Gastrocnemius medialis (tissue), 4 donors: ENCODE measurements at regions of chr7 and their contacts with region 1.

Region 1: DNA sequence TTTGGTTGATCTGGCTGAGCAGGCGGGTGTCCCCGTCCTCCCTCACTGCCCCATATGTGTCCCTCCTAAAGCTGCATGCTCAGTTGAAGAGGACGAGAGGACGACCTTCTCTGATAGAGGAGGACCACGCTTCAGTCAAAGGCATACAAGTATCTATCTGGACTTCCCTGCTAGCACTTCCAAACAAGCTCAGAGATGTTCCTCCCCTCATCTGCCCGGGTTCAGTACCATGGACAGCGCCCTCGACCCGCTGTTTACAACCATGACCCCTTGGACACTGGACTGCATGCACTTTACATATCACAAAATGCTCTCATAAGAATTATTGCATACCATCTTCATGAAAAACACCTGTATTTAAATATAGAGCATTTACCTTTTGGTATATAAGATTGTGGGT is 26.9 kb upstream of the TRIM56 start:
- DNase-seq: peak in 1 of 2 donors; percentile 20
- ATAC-seq: peak; percentile 58
- H3K4me3 ChIP-seq: no peak overlapping the region
- H3K27ac ChIP-seq: no peak overlapping the region
- H3K4me1 ChIP-seq: no peaks in the 10 kb centered on the region
- H3K27me3 ChIP-seq: peaks cover 0 to 8% (median 5%) of the 10 kb centered on the region in 3 donors
- CTCF ChIP-seq: no peak
- POLR2A ChIP-seq: no peak

Region 2: GRCh38 chr7:100655908-100656674 is 402.3 kb before region 1 on chr7 and contains the start of gene ACTL6B:
- in situ Hi-C with region 1: no loop called
- intact Hi-C with region 1: no loop called
- DNase-seq: peak in 1 of 2 donors; percentile 37
- ATAC-seq: peak; percentile 30 to 50
- H3K4me3 ChIP-seq: no peak within 1 kb of the TSS
- H3K27ac ChIP-seq: no peak within 1 kb of the TSS
- H3K4me1 ChIP-seq: no peaks in the 10 kb centered on the region
- H3K27me3 ChIP-seq: peaks cover 39 to 53% (median 50%) of the 10 kb centered on the region in 3 donors
- CTCF ChIP-seq: no peak
- POLR2A ChIP-seq: no peak
- total RNA-seq, gene ACTL6B: not detected

Region 3: GRCh38 chr7:100889761-100890634 is 168.4 kb before region 1 on chr7:
- in situ Hi-C with region 1: loop called in 2 of 4 experiments (anchors 5 kb)
- intact Hi-C with region 1: no loop called
- DNase-seq: peak; percentile 92
- ATAC-seq: peak; percentile 78 to 82
- H3K4me3 ChIP-seq: peak overlapping the region; percentile 69 to 89 (median 85)
- H3K27ac ChIP-seq: peak overlapping the region; percentile 95 to 99 (median 97)
- H3K4me1 ChIP-seq: peaks cover 28 to 49% of the 10 kb centered on the region in 2 donors
- H3K27me3 ChIP-seq: peaks cover 0 to under 1% (median 0%) of the 10 kb centered on the region in 3 donors
- CTCF ChIP-seq: peak in 1 of 5 experiments; percentile 10
- POLR2A ChIP-seq: peak; percentile 75 to 76

Region 4: DNA sequence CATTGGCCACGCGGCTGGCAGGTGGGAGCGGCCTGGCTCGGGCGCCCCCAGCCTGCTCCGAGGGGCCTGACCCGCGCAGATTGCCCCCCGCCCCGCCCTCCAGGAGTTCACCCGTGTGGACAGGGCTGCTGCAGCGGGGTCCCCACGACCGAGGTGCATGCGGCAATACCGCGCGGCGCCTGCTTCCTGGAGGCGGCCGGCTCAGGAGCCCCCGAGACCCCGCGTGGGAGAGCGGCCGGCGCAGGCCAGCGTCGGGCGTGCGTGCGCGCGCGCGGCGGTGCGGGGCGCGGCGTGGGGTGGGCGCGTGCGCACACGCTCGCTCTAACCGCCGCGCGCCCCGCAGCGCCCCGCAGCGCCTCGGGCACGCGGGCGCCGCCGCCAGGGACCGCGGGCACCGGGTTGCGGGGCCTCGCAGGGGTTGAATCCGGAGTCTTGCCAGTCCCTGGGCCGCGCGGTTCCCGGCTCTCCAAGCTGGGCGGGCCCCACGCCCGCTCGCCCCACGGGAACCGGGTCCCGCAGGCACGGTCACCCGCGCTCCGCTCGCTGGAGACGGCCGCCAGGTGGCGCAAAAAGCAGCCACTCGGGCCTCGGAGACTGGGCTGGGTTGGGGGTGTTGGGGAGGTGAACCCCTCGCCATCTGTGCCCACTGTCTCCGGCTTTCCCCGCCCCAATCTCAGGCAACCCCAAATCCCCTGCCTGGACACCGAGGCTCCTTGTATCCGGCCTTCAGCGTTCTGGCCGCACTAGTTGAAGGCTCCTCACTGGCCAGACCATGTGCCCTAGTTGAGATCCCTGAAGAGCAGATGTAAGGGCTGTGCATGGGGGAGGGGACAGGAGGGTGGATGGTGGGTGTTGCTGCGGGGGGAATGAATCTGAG is 161.4 kb before region 1 on chr7:
- in situ Hi-C with region 1: loop called in 3 of 4 experiments (anchors 5 kb)
- intact Hi-C with region 1: loop called (anchors 1 kb)
- DNase-seq: no peak
- ATAC-seq: peak; percentile 12 to 32
- H3K4me3 ChIP-seq: peak overlapping the region; percentile 52 to 82 (median 74)
- H3K27ac ChIP-seq: peak overlapping the region in 3 of 4 donors; percentile 87 to 95 (median 95)
- H3K4me1 ChIP-seq: peaks cover 18 to 34% of the 10 kb centered on the region in 2 donors
- H3K27me3 ChIP-seq: peaks cover 0 to 6% (median 0%) of the 10 kb centered on the region in 3 donors
- CTCF ChIP-seq: peak; percentile 43 to 88 (median 82)
- POLR2A ChIP-seq: no peak

Region 5: GRCh38 chr7:100908512-100908911 is 149.8 kb before region 1 on chr7:
- in situ Hi-C with region 1: loop called in 2 of 4 experiments (anchors 5 kb)
- intact Hi-C with region 1: no loop called
- DNase-seq: no peak
- ATAC-seq: no peak
- H3K4me3 ChIP-seq: no peak overlapping the region
- H3K27ac ChIP-seq: no peak overlapping the region
- H3K4me1 ChIP-seq: no peaks in the 10 kb centered on the region
- H3K27me3 ChIP-seq: no peaks in the 10 kb centered on the region
- CTCF ChIP-seq: no peak
- POLR2A ChIP-seq: no peak

Region 6: GRCh38 chr7:100965723-100966541 is 92.4 kb before region 1 on chr7:
- in situ Hi-C with region 1: loop called in 1 of 4 experiments (anchors 10 kb)
- intact Hi-C with region 1: loop called (anchors 5 kb)
- DNase-seq: peak in 1 of 2 donors; percentile 24
- ATAC-seq: peak in 1 of 2 donors; percentile 64
- H3K4me3 ChIP-seq: peak overlapping the region in 3 of 4 donors; percentile 6 to 42 (median 36)
- H3K27ac ChIP-seq: no peak overlapping the region
- H3K4me1 ChIP-seq: peaks cover 5 to 8% of the 10 kb centered on the region in 2 donors
- H3K27me3 ChIP-seq: peaks cover 43 to 57% (median 51%) of the 10 kb centered on the region in 3 donors
- CTCF ChIP-seq: peak in 3 of 5 experiments; percentile 41 to 51 (median 47)
- POLR2A ChIP-seq: no peak

Region 7: GRCh38 chr7:100974018-100974417 is 84.3 kb before region 1 on chr7:
- in situ Hi-C with region 1: loop called in 1 of 4 experiments (anchors 10 kb)
- intact Hi-C with region 1: loop called (anchors 5 kb)
- DNase-seq: no peak
- ATAC-seq: no peak
- H3K4me3 ChIP-seq: no peak overlapping the region
- H3K27ac ChIP-seq: no peak overlapping the region
- H3K4me1 ChIP-seq: no peaks in the 10 kb centered on the region
- H3K27me3 ChIP-seq: peaks cover 0 to 14% (median 3%) of the 10 kb centered on the region in 3 donors
- CTCF ChIP-seq: no peak
- POLR2A ChIP-seq: no peak

Region 8: DNA sequence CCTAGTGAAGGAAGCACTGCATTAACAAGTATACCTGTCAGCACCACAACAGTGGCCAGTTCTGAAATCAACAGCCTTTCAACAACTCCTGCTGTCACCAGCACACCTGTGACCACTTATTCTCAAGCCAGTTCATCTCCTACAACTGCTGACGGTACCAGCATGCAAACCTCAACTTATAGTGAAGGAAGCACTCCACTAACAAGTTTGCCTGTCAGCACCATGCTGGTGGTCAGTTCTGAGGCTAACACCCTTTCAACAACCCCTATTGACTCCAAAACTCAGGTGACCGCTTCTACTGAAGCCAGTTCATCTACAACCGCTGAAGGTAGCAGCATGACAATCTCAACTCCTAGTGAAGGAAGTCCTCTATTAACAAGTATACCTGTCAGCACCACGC is 22.4 kb before region 1 on chr7:
- in situ Hi-C with region 1: no loop called
- intact Hi-C with region 1: no loop called
- DNase-seq: no peak
- ATAC-seq: no peak
- H3K4me3 ChIP-seq: no peak overlapping the region
- H3K27ac ChIP-seq: no peak overlapping the region
- H3K4me1 ChIP-seq: no peaks in the 10 kb centered on the region
- H3K27me3 ChIP-seq: peaks cover 0 to 9% (median 0%) of the 10 kb centered on the region in 3 donors
- CTCF ChIP-seq: no peak
- POLR2A ChIP-seq: no peak

Region 9: DNA sequence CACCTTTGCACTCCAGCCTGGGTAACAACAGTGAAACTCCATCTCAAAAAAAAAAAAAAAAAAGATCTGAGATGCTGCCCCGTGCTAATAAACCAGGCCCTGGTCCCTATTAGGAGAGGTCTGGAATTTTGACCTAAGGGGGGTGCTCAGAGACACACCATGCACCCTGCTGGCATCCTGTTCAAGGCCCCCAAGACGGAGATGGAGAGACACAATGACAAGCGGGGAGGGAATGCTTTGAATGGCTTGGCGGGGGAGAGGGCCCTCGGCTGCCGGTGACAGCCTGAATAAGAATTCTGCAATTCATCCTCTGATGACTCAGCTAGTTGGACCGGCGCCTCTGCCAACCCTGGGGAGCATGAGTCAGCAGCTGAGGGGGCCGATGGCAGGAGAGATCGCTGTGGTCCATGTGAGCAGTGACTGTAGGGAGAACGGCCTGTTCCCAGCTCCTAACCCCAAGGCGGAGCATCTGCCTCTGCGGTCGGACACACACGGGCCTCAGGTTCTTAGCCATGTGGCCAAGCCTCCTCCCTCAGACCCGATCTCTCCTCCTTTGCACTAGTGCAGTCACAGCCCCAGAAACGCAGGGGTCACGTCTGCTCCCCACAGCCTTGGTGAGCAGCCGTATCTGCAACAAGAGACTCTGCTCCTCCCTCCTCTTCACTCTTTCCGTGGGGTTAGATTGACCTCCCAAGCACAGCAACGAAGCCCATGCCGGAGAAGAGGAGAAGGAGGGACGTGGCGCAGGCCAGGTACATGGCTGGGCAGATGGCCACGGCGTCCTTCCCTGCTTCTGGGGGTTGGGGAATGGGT is 41.8 kb after region 1 on chr7:
- in situ Hi-C with region 1: no loop called
- intact Hi-C with region 1: no loop called
- DNase-seq: peak; percentile 88 to 96
- ATAC-seq: peak; percentile 96 to 97
- H3K4me3 ChIP-seq: peak overlapping the region in 1 of 4 donors; percentile 11
- H3K27ac ChIP-seq: peak overlapping the region; percentile 64 to 82 (median 80)
- H3K4me1 ChIP-seq: peaks cover 15 to 18% of the 10 kb centered on the region in 2 donors
- H3K27me3 ChIP-seq: peaks cover 0 to 2% (median 0%) of the 10 kb centered on the region in 3 donors
- CTCF ChIP-seq: no peak
- POLR2A ChIP-seq: peak in 1 of 2 donors; percentile 15